Activated CD4-positive, alpha-beta T cell treated with anti-CD3 and anti-CD28 coated beads for 36 hours (primary cell): ENCODE measurements at regions of chr9 and their contacts with region 1.

Region 1: DNA sequence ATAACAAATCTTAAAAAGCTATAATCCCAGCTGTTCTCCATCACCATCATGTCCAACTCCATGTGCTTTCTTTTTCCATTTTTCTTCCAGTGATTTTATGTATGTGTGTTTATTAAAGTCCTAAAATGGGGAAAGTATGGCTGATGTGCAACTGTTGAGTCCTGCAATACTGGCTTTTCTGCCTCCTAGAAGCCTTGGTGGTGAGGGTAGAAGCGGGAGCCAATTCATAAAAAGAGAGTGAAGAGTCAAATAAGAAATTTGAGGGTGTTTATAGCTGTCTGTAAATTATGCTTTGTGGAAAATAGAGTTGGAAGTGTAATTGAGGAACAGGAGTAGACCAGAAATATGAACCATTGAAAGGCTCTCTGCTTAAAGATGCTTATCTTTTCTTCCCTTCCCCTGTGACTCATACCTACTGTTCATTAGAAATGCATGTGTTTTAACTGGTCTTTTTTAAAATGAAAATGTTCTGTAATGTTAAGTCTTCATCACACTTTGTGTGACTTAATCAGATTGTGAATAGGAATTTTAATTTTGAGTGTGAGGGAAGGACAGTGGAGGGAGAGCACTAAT is 80.1 kb downstream of the ZCCHC7 start:
- DNase-seq: no peak
- ATAC-seq: peak; percentile 52
- H3K4me3 Mint-ChIP-seq: no peak overlapping the region
- H3K27ac Mint-ChIP-seq: peak overlapping the region; percentile 74
- H3K4me1 Mint-ChIP-seq: peaks cover 55% of the 10 kb centered on the region
- H3K27me3 Mint-ChIP-seq: no peaks in the 10 kb centered on the region

Region 2: DNA sequence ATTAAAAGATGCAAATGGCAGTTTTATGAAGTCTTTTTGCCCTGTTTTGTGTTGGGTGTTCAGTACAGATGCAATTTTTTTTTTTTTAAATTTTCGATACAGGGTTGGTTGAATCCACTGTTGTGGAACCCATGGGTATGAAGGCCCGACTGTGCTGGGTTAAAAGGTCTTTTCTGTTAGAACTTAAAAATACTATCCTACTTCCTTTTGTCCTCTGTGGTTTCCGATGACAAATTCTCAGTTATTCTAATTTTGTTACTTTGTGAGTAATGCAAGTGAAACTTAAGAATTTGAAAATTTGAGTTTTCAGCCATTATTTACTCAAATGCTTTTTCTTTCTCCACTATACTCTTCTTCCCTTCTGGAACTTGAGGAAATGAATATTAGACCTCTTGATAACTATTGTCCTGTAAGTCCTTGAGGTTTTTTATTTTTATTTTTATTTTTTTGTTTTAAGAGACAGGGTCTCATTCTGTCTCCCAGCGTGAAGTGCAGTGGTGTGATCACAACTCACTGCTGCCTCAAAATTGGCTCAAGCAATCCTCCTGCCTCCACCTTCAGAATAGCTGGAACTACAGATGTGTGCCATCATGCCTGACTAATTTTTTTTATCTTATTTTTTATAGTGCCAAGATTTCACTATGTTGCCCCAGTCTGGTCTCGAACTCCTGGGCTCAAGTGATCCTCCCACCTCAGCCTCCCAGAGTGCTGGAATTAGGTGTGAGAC is 12.6 kb before region 1 on chr9:
- CTCF ChIA-PET with region 1: no interaction called
- POLR2A ChIA-PET with region 1: no interaction called
- intact Hi-C with region 1: loop called in 1 of 2 experiments (anchors 1 kb)
- DNase-seq: peak; percentile 30
- ATAC-seq: peak; percentile 87
- H3K4me3 Mint-ChIP-seq: peak overlapping the region; percentile 36
- H3K27ac Mint-ChIP-seq: peak overlapping the region; percentile 90
- H3K4me1 Mint-ChIP-seq: peaks cover 44% of the 10 kb centered on the region
- H3K27me3 Mint-ChIP-seq: no peaks in the 10 kb centered on the region

Region 3: DNA sequence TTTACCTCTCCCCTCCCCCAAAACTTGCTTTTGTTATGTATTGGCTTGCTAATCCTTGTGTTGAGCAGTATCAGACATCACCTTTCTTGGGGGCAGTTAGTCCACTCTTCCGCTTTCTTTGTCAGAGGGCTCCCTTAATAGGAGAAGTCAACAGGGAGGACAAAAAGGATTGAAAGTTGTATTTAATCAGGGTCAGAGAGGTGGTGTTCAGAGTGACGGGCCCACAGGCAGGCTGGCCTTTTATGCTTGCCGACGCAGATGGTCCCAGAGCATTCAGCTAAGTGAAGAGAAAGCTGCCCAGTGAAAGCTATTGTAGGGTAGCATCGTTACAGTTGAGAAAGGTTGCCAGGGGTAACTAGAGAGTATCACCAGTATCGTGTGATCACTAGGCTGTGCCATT is 50.9 kb after region 1 on chr9:
- CTCF ChIA-PET with region 1: interaction called, 3 read pairs
- POLR2A ChIA-PET with region 1: no interaction called
- intact Hi-C with region 1: loop called in 1 of 2 experiments (anchors 2 kb)
- DNase-seq: no peak
- ATAC-seq: no peak
- H3K4me3 Mint-ChIP-seq: no peak overlapping the region
- H3K27ac Mint-ChIP-seq: no peak overlapping the region
- H3K4me1 Mint-ChIP-seq: peaks cover 4% of the 10 kb centered on the region
- H3K27me3 Mint-ChIP-seq: no peaks in the 10 kb centered on the region

Region 4: DNA sequence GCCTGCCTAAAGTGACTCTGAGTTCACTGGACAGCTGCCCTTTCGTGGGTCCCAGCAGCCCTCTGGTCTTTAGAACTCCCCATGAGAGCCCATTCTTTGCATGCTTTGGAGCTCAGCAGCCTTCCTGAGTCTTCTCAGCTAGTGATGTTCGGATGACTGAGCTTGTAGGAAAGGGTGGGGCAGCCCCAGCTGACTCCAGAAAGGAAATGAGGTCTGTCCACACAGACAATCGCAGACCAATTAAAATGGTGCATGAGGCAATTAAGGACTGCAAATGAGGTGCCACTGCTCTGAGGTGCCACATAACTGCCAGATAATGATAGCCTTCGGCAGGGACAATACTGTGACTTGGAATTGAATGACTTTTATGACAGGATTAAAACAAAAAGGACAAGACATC is 417.3 kb after region 1 on chr9:
- CTCF ChIA-PET with region 1: no interaction called
- POLR2A ChIA-PET with region 1: no interaction called
- intact Hi-C with region 1: no loop called
- DNase-seq: no peak
- ATAC-seq: no peak
- H3K4me3 Mint-ChIP-seq: no peak overlapping the region
- H3K27ac Mint-ChIP-seq: no peak overlapping the region
- H3K4me1 Mint-ChIP-seq: no peaks in the 10 kb centered on the region
- H3K27me3 Mint-ChIP-seq: peaks cover 5% of the 10 kb centered on the region